ENCODE measurements at regions of chr3 and their contacts with region 1.

Region 1: DNA sequence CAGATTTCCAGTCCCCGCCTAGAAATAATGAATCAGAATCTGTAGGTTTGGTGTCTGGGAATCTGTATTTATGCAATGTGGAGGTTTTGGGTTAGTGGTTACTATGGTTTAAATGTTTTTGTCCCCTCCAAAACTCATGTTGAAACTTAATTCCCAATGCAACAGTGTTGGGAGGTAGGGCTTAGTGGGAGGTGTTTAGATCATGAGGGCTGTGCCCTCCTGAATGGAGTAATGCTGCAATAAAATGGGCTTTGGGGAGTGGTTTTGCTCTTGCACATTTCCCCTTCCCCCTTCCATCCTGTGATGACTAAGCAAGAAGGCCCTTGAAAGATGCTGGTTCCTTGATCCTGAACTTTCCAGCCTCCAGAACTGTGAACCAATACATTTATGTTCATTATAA is 9.2 kb upstream of the RFC4 start:
- DNase-seq: no peak
- H3K4me3 ChIP-seq: no peak overlapping the region
- H3K27ac ChIP-seq: no peak overlapping the region
- H3K4me1 ChIP-seq: no peaks in the 10 kb centered on the region
- H3K27me3 ChIP-seq: peaks cover 0 to 33% (median 0%) of the 10 kb centered on the region in 4 donors
- CTCF ChIP-seq: no peak
- POLR2A ChIP-seq: no peak

Region 2: DNA sequence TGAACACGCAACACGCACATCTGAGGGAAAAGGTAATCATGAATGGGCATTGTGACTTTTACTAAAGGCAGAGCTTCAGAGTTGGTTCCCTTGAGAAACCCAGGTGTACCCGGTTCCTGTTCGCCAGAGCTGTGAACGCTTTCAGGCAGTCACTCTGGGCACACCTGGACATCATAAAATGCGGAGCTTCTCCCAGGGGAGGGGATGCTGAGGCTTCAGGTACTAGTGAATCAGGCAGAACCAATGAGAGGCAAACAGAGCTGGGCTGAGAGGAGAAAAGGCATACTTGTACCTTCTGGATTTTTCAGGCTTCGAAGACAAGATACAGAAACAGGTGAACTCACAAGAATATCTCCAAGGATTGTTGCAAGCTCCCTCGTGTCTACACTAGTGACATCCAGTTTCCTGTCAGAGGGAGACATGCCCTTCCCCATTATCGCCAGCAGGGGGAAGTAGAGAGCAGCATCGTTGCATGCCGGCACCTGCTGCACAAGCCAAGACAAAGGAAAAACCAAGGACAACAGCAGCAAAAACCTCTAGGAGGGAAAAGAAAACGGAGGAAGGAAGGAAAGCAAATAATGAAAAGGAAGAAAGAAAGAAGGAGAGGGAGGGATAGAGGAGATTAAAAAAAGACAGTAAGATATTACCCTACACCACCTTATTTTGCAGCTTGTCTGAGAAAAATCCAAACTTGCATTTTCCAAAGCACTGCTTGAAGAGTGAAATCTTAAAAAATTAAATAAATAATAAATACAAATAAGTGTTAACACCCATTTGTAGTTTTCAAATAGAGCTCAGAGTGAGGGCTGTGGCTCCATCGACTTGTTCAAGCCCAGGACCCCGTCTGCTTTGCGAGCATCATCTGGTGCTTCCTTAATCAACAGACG is 200.6 kb before region 1 on chr3:
- intact Hi-C with region 1: loop called (anchors 5 kb)
- DNase-seq: no peak
- H3K4me3 ChIP-seq: no peak overlapping the region
- H3K27ac ChIP-seq: no peak overlapping the region
- H3K4me1 ChIP-seq: peaks cover 3 to 27% (median 9%) of the 10 kb centered on the region in 3 donors
- H3K27me3 ChIP-seq: peaks cover 0 to 54% (median 0%) of the 10 kb centered on the region in 4 donors
- CTCF ChIP-seq: peak; percentile 89 to 99 (median 96)
- POLR2A ChIP-seq: no peak

Region 3: DNA sequence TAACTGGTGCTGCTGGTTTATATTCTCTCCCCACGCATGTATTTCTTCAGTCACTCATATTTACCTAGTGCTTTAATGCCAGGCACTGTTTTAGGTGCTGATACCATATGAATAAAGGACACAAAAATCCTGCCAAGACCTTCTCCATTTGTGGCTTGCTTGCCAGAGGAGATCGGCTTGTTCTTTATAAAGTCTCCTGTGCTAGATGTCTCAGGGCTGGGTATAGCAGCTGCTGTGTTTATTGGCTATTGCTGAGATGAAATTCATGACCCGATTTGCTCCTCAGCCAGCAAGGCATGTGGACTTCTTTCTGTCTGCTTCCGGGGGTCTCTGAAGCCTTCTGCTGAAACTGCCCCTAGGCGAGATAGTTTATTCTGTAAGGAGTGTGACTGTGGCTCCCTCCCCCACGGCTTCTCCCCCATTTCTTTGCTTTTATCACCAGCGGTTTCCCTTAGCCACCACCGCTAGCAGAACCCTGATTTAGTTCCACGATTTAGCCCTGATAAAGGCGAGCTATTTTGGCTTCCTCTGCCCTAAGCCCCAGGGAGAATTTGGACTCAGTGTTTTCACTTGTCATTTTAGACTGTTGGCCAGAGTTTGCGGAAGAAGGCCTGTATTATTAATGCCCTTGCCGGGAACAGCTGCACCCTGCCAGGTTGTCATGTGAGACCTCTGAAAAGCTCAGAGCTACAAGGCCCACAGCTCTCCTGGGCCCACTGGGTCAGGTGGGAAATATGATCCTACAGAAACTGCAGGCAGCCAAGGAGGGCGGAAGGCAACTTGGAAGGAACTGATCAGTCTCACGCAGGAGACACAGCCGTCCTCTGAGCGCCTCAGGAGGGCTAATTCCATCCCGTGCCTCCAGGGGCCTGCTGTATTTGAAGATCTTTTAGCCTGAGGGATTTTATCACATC is 161.7 kb after region 1 on chr3:
- intact Hi-C with region 1: no loop called
- DNase-seq: peak; percentile 4
- H3K4me3 ChIP-seq: peak overlapping the region in 1 of 4 donors; percentile 30
- H3K27ac ChIP-seq: peak overlapping the region; percentile 52 to 84 (median 73)
- H3K4me1 ChIP-seq: peaks cover 0 to 30% (median 7%) of the 10 kb centered on the region in 3 donors
- H3K27me3 ChIP-seq: no peaks in the 10 kb centered on the region
- CTCF ChIP-seq: no peak
- POLR2A ChIP-seq: no peak